ENCODE measurements at regions of chr1 and their contacts with region 1.

Region 1: GRCh38 chr1:209207701-209208286 is 375.7 kb upstream of the CAMK1G start:
- DNase-seq: no peak
- ATAC-seq: peak; percentile 88
- H3K4me3 ChIP-seq: no peak overlapping the region
- H3K27ac ChIP-seq: no peak overlapping the region
- H3K4me1 ChIP-seq: no peaks in the 10 kb centered on the region
- H3K27me3 ChIP-seq: peaks cover 51% of the 10 kb centered on the region
- CTCF ChIP-seq: peak; percentile 34 to 62 (median 61); a peak in 5 of 6 replicates
- POLR2A ChIP-seq: no peak
- RAD21 ChIP-seq: peak; percentile 66

Region 2: DNA sequence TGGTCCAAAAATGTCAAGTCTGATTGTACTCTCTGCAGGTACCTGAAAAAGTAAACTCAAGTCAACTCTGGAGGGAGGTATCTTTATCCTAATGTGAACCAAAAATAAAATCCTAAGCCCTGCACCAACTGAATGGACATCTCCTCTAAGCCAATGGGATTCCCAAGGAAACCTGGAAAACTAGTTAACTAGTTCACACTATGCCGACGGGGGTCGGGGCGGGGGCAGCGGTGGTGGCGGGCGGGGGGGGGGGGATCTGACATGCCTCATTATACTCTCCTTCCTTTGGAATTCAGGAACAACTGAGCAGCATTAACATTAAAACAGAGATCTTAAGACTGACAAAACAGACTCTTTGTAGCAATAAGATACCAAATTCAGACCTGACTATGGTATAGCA is 76.9 kb before region 1 on chr1:
- CTCF ChIA-PET with region 1: no interaction called
- POLR2A ChIA-PET with region 1: no interaction called
- RAD21 ChIA-PET with region 1: no interaction called
- intact Hi-C with region 1: no loop called
- DNase-seq: no peak
- ATAC-seq: no peak
- H3K4me3 ChIP-seq: no peak overlapping the region
- H3K27ac ChIP-seq: no peak overlapping the region
- H3K4me1 ChIP-seq: no peaks in the 10 kb centered on the region
- H3K27me3 ChIP-seq: no peaks in the 10 kb centered on the region
- CTCF ChIP-seq: no peak
- POLR2A ChIP-seq: no peak
- RAD21 ChIP-seq: no peak

Region 3: DNA sequence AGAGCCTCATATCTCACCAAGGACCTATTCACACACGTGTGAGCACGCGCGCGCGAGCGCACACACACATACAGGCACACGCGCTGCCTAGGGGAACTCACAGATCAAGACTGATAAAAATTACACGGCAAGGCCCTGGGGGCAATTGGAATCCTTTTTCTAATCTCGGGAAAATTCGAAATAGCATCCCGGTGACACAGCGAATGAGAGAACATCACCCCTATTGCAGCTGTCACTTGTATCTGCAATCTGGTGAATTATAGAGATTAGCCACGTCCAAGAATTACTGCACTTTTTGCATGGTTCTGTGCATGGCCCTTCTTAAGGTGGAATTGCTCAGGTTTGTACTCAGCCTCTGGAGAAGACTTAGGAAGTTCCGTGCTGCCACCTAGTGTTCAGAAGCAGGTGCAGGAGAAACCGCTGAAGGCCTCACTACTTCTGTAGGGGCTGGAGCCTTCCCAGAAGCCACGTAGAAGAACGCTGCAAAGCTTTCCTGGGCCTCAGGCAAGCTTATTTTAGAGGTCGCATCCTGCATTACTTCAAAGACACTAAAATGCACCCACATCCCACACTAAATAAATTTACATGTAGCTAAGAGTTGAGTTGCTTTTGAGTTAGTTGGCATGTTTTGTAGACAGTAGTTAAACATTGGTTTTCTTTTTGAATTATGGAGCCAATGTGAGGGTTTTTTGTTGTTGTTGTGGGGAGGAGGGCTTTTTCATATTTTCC is 146.5 kb after region 1 on chr1:
- CTCF ChIA-PET with region 1: interaction called, 3 read pairs
- POLR2A ChIA-PET with region 1: no interaction called
- RAD21 ChIA-PET with region 1: no interaction called
- intact Hi-C with region 1: loop called (anchors 1 kb)
- DNase-seq: peak; percentile 85
- ATAC-seq: peak; percentile 99
- H3K4me3 ChIP-seq: no peak overlapping the region
- H3K27ac ChIP-seq: no peak overlapping the region
- H3K4me1 ChIP-seq: no peaks in the 10 kb centered on the region
- H3K27me3 ChIP-seq: 0 out of 2 replicates have a peak, but pooled peaks cover 5% of the 10 kb centered on the region
- CTCF ChIP-seq: peak; percentile 76 to 94 (median 89)
- POLR2A ChIP-seq: no peak
- RAD21 ChIP-seq: peak; percentile 85

Region 4: GRCh38 chr1:209435654-209436566 is 228.1 kb after region 1 on chr1:
- CTCF ChIA-PET with region 1: no interaction called
- POLR2A ChIA-PET with region 1: no interaction called
- RAD21 ChIA-PET with region 1: no interaction called
- intact Hi-C with region 1: loop called (anchors 1 kb)
- DNase-seq: peak; percentile 69
- ATAC-seq: peak; percentile 99
- H3K4me3 ChIP-seq: no peak overlapping the region
- H3K27ac ChIP-seq: no peak overlapping the region
- H3K4me1 ChIP-seq: no peaks in the 10 kb centered on the region
- H3K27me3 ChIP-seq: no peaks in the 10 kb centered on the region
- CTCF ChIP-seq: peak; percentile 76 to 91 (median 88)
- POLR2A ChIP-seq: no peak
- RAD21 ChIP-seq: peak; percentile 96

Region 5: GRCh38 chr1:209513226-209513625 is 305.4 kb after region 1 on chr1:
- CTCF ChIA-PET with region 1: interaction called, 5 read pairs
- POLR2A ChIA-PET with region 1: no interaction called
- RAD21 ChIA-PET with region 1: no interaction called
- intact Hi-C with region 1: loop called (anchors 1 kb)
- DNase-seq: peak; percentile 48
- ATAC-seq: peak; percentile 96
- H3K4me3 ChIP-seq: no peak overlapping the region
- H3K27ac ChIP-seq: no peak overlapping the region
- H3K4me1 ChIP-seq: no peaks in the 10 kb centered on the region
- H3K27me3 ChIP-seq: peaks cover 13% of the 10 kb centered on the region
- CTCF ChIP-seq: peak; percentile 42 to 82 (median 75); a peak in 5 of 6 replicates
- POLR2A ChIP-seq: no peak
- RAD21 ChIP-seq: peak; percentile 78

Region 6: GRCh38 chr1:209565759-209566678 is 358.2 kb after region 1 on chr1:
- CTCF ChIA-PET with region 1: interaction called, 5 read pairs
- POLR2A ChIA-PET with region 1: no interaction called
- RAD21 ChIA-PET with region 1: no interaction called
- intact Hi-C with region 1: loop called (anchors 2 kb)
- DNase-seq: peak; percentile 78
- ATAC-seq: peak; percentile 96
- H3K4me3 ChIP-seq: no peak overlapping the region
- H3K27ac ChIP-seq: no peak overlapping the region
- H3K4me1 ChIP-seq: peaks cover 0 to 6% of the 10 kb centered on the region in 2 experiments; a peak in 1 of 4 replicates
- H3K27me3 ChIP-seq: peaks cover 10% of the 10 kb centered on the region; the same call in 1 of the 2 replicates
- CTCF ChIP-seq: peak; percentile 74 to 84 (median 83); a peak in 5 of 6 replicates
- POLR2A ChIP-seq: no peak
- RAD21 ChIP-seq: peak; percentile 83

Region 7: GRCh38 chr1:209651148-209651547 is 443.4 kb after region 1 on chr1:
- CTCF ChIA-PET with region 1: no interaction called
- POLR2A ChIA-PET with region 1: no interaction called
- RAD21 ChIA-PET with region 1: no interaction called
- intact Hi-C with region 1: no loop called
- DNase-seq: peak; percentile 67
- ATAC-seq: peak; percentile 70
- H3K4me3 ChIP-seq: peak overlapping the region; percentile 46 to 57
- H3K27ac ChIP-seq: peak overlapping the region; percentile 46
- H3K4me1 ChIP-seq: peaks cover 63 to 89% of the 10 kb centered on the region in 2 experiments
- H3K27me3 ChIP-seq: no peaks in the 10 kb centered on the region
- CTCF ChIP-seq: no peak
- POLR2A ChIP-seq: no peak
- RAD21 ChIP-seq: no peak

Measured in HCT116 (cell line).